ENCODE measurements at regions of chr5 and their contacts with region 1.

Region 1: DNA sequence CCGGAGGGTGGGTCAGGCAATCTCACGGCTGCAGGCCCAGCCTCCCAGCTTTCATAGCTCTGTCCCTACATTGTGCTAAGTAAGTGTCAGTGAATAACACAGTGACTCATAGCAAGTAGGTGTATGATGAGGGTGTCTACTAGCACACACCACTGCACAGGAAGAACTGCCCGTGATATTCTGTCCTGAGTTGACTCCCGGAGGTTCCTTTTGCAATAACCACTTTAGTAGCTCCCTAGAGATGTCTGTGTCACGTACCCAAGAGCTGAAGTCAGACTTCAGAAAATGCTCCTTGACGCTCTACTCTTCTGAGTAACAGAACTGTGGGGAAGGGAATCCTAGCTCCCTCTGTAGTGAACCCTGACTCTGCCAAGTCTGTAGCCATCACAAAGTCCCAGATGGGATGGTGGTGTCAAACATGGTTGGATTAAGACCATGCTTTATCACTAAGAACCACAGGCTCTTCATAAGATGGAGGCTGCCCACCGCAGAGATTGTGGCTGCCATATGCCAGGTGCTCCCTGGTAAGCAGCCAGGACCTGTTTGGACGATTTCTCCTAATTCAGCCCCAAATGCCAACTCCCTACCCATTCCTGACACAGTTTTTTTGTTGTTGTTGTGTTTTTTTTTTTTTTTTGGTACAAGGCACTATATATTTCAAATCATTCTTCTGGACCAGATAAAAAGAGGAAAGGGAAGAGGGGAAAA is 352.6 kb upstream of the PANK3 start:
- DNase-seq: no peak
- H3K4me3 ChIP-seq: no peak overlapping the region
- H3K27ac ChIP-seq: no peak overlapping the region
- H3K4me1 ChIP-seq: no peaks in the 10 kb centered on the region
- H3K27me3 ChIP-seq: no peaks in the 10 kb centered on the region
- CTCF ChIP-seq: no peak
- POLR2A ChIP-seq: no peak

Region 2: DNA sequence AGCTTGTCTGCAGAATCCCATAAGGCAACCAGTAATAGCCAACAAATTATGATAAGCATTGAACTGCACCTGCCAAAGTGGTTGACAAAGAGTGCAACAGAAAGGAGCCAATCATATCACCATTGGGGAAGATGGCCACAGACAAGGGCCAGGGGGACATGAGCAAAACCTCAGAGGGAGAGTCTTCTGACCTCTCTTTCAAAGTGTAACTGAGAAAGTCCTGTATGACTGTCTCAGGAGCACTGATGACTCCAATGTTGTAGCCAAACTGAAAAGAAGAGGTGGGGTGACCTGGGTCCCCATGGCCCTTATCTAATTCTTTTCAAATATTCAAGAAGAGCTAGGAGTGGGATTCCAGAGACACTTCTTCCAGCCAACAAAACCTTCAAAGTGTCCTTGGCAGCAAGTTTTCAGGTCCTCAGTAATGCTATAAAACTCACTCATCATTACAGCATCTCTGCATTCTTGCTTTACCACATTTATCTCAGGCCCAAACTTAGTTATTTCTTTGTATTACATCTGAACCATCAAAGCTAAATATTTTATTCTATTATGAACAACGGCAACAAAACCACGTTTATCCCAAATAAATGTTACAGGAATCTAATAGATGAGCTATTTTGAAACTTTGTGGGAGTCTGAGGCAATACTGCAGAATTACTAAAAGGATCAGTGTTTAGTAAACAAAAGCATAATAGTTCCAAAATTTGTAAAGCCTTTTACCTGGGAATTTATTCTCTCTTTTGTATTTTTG is 378.2 kb before region 1 on chr5:
- intact Hi-C with region 1: no loop called
- DNase-seq: no peak
- H3K4me3 ChIP-seq: no peak overlapping the region
- H3K27ac ChIP-seq: no peak overlapping the region
- H3K4me1 ChIP-seq: no peaks in the 10 kb centered on the region
- H3K27me3 ChIP-seq: no peaks in the 10 kb centered on the region
- CTCF ChIP-seq: no peak
- POLR2A ChIP-seq: no peak

Region 3: GRCh38 chr5:168987543-168988300 is 55.9 kb after region 1 on chr5:
- intact Hi-C with region 1: no loop called
- DNase-seq: no peak
- H3K4me3 ChIP-seq: no peak overlapping the region
- H3K27ac ChIP-seq: no peak overlapping the region
- H3K4me1 ChIP-seq: no peaks in the 10 kb centered on the region
- H3K27me3 ChIP-seq: no peaks in the 10 kb centered on the region
- CTCF ChIP-seq: peak; percentile 79 to 94 (median 86)
- POLR2A ChIP-seq: no peak

Region 4: DNA sequence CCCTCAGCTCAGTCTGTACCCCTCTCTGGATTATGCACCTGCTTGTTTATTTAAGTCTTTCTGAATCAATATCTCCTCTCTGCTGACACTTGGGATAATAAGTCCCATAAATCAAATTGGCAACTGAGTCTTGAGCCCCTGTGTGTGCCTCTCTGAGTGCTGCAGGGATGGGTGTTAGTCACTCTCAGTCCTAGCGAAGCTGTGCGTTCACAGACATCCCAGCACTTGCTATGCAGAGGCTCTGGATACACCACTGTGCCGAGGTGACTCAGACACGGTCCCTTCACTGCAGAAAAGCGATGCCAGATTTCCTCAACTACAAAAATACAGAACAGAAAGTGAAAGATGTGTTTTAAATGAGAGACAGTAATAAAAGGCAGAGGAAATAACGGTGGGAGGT is 1461.4 kb after region 1 on chr5:
- intact Hi-C with region 1: loop called (anchors 5 kb)
- DNase-seq: no peak
- H3K4me3 ChIP-seq: no peak overlapping the region
- H3K27ac ChIP-seq: no peak overlapping the region
- H3K4me1 ChIP-seq: no peaks in the 10 kb centered on the region
- H3K27me3 ChIP-seq: no peaks in the 10 kb centered on the region
- CTCF ChIP-seq: no peak
- POLR2A ChIP-seq: no peak

Measured in vagina (tissue), 2 donors.